ENCODE measurements at regions of chr22 and their contacts with region 1.

Region 1: GRCh38 chr22:23385291-23386244 is 194.5 kb downstream of the IGLL1 start:
- DNase-seq: peak; percentile 93
- ATAC-seq: peak; percentile 80
- H3K4me3 Mint-ChIP-seq: no peak overlapping the region
- H3K27ac Mint-ChIP-seq: no peak overlapping the region
- H3K4me1 Mint-ChIP-seq: peaks cover 12% of the 10 kb centered on the region; the same call in 1 of the 2 replicates
- H3K27me3 Mint-ChIP-seq: peaks cover 3% of the 10 kb centered on the region; the same call in 1 of the 2 replicates
- CTCF ChIP-seq: peak; percentile 100

Region 2: GRCh38 chr22:23152315-23153113 is 233.1 kb before region 1 on chr22:
- CTCF ChIA-PET with region 1: interaction called, 18 read pairs
- POLR2A ChIA-PET with region 1: no interaction called
- DNase-seq: no peak
- ATAC-seq: no peak
- H3K4me3 Mint-ChIP-seq: no peak overlapping the region
- H3K27ac Mint-ChIP-seq: no peak overlapping the region
- H3K4me1 Mint-ChIP-seq: peaks cover 47% of the 10 kb centered on the region
- H3K27me3 Mint-ChIP-seq: peaks cover 4% of the 10 kb centered on the region
- CTCF ChIP-seq: no peak

Region 3: DNA sequence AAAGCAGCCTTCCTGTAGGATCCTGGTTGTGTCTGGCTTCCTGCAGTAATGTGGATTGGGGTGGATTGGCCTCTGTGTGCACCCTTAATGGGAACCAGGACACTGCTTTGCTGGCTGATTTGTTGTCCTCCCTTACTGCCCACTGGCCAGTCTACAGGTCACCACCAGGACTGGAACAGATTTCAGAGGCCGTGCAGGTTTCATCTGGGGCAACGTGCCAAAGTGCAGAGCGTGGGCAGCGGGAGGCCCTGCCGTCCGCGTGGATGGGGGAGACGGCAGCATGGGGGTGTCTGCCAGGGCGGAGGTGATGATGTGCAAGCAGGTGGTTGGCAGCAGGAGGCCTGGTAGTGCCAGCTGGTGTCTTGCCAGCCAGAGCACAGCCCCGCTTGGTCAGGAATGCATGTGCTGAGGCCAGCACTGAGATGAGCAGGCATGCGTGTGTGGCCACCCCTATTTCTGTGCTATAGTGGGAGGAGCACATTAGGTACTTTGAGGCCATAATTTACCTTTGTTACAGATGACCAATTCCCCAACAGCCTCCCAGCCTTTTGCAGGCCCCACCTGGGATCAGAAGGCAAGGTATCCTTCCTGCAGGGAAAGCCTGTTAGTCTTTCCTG is 180.9 kb before region 1 on chr22:
- CTCF ChIA-PET with region 1: no interaction called
- POLR2A ChIA-PET with region 1: no interaction called
- DNase-seq: no peak
- ATAC-seq: peak; percentile 41; the same call in 1 of the 2 replicates
- H3K4me3 Mint-ChIP-seq: no peak overlapping the region
- H3K27ac Mint-ChIP-seq: peak overlapping the region; percentile 72
- H3K4me1 Mint-ChIP-seq: peaks cover 31% of the 10 kb centered on the region
- H3K27me3 Mint-ChIP-seq: no peaks in the 10 kb centered on the region
- CTCF ChIP-seq: no peak

Region 4: GRCh38 chr22:23256986-23257888 is 128.3 kb before region 1 on chr22:
- CTCF ChIA-PET with region 1: no interaction called
- POLR2A ChIA-PET with region 1: no interaction called
- DNase-seq: no peak
- ATAC-seq: no peak
- H3K4me3 Mint-ChIP-seq: no peak overlapping the region
- H3K27ac Mint-ChIP-seq: peak overlapping the region; percentile 75
- H3K4me1 Mint-ChIP-seq: peaks cover 27% of the 10 kb centered on the region
- H3K27me3 Mint-ChIP-seq: no peaks in the 10 kb centered on the region
- CTCF ChIP-seq: no peak

Region 5: DNA sequence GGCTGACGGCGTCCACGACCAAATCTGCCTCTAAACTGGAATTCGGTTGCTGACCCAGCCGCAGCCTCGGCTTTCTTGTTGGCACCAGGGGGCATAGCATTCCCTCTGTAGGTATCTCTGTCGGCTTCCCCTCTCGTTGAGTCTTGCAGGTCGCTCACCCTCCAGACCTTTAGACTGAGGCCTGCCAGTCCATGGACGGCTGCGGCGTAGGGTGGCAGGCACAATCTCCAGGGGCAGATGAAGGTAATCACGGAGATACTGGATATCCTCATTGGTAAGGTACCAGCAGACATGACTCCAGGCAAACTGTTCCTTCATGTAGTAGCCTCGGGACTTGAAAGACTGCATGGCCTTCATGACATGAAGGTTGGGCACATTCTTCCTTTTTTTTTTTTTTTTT is 63.0 kb before region 1 on chr22:
- CTCF ChIA-PET with region 1: interaction called, 28 read pairs
- POLR2A ChIA-PET with region 1: no interaction called
- DNase-seq: peak; percentile 50
- ATAC-seq: no peak
- H3K4me3 Mint-ChIP-seq: no peak overlapping the region
- H3K27ac Mint-ChIP-seq: no peak overlapping the region
- H3K4me1 Mint-ChIP-seq: peaks cover 14% of the 10 kb centered on the region
- H3K27me3 Mint-ChIP-seq: no peaks in the 10 kb centered on the region
- CTCF ChIP-seq: no peak

Region 6: GRCh38 chr22:23395530-23396361 is 10.2 kb after region 1 on chr22:
- CTCF ChIA-PET with region 1: interaction called, 17 read pairs
- POLR2A ChIA-PET with region 1: no interaction called
- DNase-seq: peak; percentile 9
- ATAC-seq: no peak
- H3K4me3 Mint-ChIP-seq: no peak overlapping the region
- H3K27ac Mint-ChIP-seq: no peak overlapping the region
- H3K4me1 Mint-ChIP-seq: no peaks in the 10 kb centered on the region
- H3K27me3 Mint-ChIP-seq: no peaks in the 10 kb centered on the region
- CTCF ChIP-seq: no peak

Region 7: GRCh38 chr22:23478201-23478600 is 92.6 kb after region 1 on chr22:
- CTCF ChIA-PET with region 1: no interaction called
- POLR2A ChIA-PET with region 1: no interaction called
- DNase-seq: no peak
- ATAC-seq: no peak
- H3K4me3 Mint-ChIP-seq: no peak overlapping the region
- H3K27ac Mint-ChIP-seq: no peak overlapping the region
- H3K4me1 Mint-ChIP-seq: peaks cover 4% of the 10 kb centered on the region
- H3K27me3 Mint-ChIP-seq: peaks cover 13% of the 10 kb centered on the region
- CTCF ChIP-seq: no peak

Region 8: GRCh38 chr22:23591201-23591791 is 205.7 kb after region 1 on chr22:
- CTCF ChIA-PET with region 1: interaction called, 15 read pairs
- POLR2A ChIA-PET with region 1: no interaction called
- DNase-seq: peak; percentile 86
- ATAC-seq: peak; percentile 98
- H3K4me3 Mint-ChIP-seq: no peak overlapping the region
- H3K27ac Mint-ChIP-seq: no peak overlapping the region
- H3K4me1 Mint-ChIP-seq: peaks cover 16% of the 10 kb centered on the region
- H3K27me3 Mint-ChIP-seq: peaks cover 2% of the 10 kb centered on the region; the same call in 1 of the 2 replicates
- CTCF ChIP-seq: peak; percentile 94

Measured in WTC11 (cell line).